ENCODE measurements at regions of chr6 and their contacts with region 1.

Region 1: DNA sequence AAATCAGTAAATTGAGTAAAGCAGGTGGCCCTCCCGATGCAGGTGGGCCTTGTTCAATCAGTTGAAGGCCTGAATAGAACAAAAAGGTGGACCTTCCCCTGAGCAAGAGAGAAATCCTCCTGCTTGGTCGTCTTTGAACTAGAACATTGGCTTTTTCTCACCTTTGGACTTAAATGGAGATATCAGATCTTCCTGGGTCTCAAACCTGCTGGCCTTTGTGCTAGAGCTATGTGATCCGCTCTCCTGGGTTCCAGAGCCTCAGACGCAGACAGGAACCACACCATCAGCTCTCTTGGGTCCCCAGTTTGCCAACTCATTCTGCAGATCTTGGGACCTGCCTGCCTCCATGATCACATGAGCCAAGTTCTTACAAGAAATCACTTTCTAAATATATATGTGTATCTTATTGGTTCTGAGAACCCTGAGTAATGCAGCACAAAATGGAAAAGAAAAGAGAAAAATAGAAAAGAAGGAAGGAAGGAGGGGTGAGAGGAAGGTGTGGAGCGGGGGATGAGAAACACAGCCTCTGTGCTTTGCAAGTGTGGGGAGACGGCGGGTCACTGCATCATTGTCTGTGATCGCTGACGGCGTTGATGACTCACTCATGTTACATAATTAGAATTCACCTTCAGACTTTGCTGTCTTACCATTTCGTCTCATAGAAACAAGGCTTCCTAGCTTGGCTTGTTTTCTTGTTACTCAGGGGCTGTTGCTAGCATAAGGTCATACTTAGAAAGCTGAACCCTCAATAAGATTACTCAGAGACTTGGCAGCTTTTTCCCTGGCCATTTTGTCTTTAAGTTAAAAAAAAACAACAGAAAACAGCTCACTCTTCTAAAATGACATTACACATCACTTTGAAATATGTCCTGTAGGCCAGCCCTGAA is 85.7 kb upstream of the NEDD9 start:
- DNase-seq: peak; percentile 99
- H3K4me3 ChIP-seq: no peak overlapping the region
- H3K27ac ChIP-seq: peak overlapping the region; percentile 100
- H3K4me1 ChIP-seq: peaks cover 37% of the 10 kb centered on the region
- H3K27me3 ChIP-seq: no peaks in the 10 kb centered on the region
- CTCF ChIP-seq: no peak
- POLR2A ChIP-seq: no peak

Region 2: GRCh38 chr6:10451828-10452509 is 866.2 kb before region 1 on chr6:
- CTCF ChIA-PET with region 1: no interaction called
- POLR2A ChIA-PET with region 1: no interaction called
- dilution Hi-C with region 1: no loop called
- intact Hi-C with region 1: no loop called
- DNase-seq: no peak
- H3K4me3 ChIP-seq: no peak overlapping the region
- H3K27ac ChIP-seq: no peak overlapping the region
- H3K4me1 ChIP-seq: no peaks in the 10 kb centered on the region
- H3K27me3 ChIP-seq: no peaks in the 10 kb centered on the region
- CTCF ChIP-seq: no peak
- POLR2A ChIP-seq: no peak

Region 3: DNA sequence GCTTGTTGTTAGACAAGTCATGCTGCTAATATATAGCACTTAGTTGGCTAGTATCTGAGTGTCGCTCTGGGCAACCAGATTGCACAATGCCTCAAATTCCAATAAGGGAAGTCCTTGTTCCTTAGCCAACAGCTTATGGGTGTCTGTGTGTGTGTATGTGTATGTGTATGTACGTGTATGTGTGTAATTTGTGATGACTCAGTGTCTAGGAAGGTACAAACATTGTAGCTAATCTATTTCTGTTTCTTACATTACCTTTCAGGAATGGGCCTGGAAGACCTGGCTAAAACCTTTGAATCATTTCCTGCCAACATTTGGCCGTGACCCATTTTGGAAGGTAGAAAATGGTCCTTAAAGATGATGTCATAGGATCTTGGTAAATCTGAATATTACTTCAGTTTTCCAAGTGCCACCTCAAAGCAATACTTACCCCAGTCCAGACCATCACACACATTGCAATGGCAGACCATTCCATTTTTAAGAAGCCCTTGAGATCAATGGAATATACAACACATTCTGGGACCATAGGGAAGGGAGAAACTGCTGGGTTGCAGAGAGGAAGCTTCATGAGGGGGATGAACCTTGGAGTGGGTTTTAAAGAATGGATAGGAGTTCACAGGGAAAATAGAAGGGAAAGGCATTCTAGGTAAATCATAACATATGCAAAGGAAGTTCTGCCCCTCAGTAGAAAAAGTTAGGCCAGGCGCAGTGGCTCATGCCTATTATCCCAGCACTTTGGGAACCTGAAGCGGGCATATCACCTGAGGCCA is 110.7 kb before region 1 on chr6:
- CTCF ChIA-PET with region 1: interaction called, 3 read pairs
- POLR2A ChIA-PET with region 1: no interaction called
- dilution Hi-C with region 1: no loop called
- intact Hi-C with region 1: loop called (anchors 1 kb)
- DNase-seq: peak; percentile 96
- H3K4me3 ChIP-seq: no peak overlapping the region
- H3K27ac ChIP-seq: peak overlapping the region; percentile 95
- H3K4me1 ChIP-seq: peaks cover 69% of the 10 kb centered on the region
- H3K27me3 ChIP-seq: no peaks in the 10 kb centered on the region
- CTCF ChIP-seq: no peak
- POLR2A ChIP-seq: peak; percentile 43

Region 4: GRCh38 chr6:11251541-11252360 is 66.4 kb before region 1 on chr6:
- CTCF ChIA-PET with region 1: no interaction called
- POLR2A ChIA-PET with region 1: no interaction called
- dilution Hi-C with region 1: no loop called
- intact Hi-C with region 1: loop called (anchors 1 kb)
- DNase-seq: peak; percentile 92
- H3K4me3 ChIP-seq: no peak overlapping the region
- H3K27ac ChIP-seq: peak overlapping the region; percentile 57
- H3K4me1 ChIP-seq: peaks cover 22% of the 10 kb centered on the region
- H3K27me3 ChIP-seq: no peaks in the 10 kb centered on the region
- CTCF ChIP-seq: no peak
- POLR2A ChIP-seq: no peak

Region 5: GRCh38 chr6:11270030-11271027 is 47.8 kb before region 1 on chr6:
- CTCF ChIA-PET with region 1: no interaction called
- POLR2A ChIA-PET with region 1: no interaction called
- dilution Hi-C with region 1: no loop called
- intact Hi-C with region 1: no loop called
- DNase-seq: peak; percentile 11
- H3K4me3 ChIP-seq: no peak overlapping the region
- H3K27ac ChIP-seq: no peak overlapping the region
- H3K4me1 ChIP-seq: no peaks in the 10 kb centered on the region
- H3K27me3 ChIP-seq: no peaks in the 10 kb centered on the region
- CTCF ChIP-seq: no peak
- POLR2A ChIP-seq: no peak

Region 6: GRCh38 chr6:11353921-11354389 is 35.8 kb after region 1 on chr6:
- CTCF ChIA-PET with region 1: interaction called, 6 read pairs
- POLR2A ChIA-PET with region 1: interaction called, 6 read pairs
- dilution Hi-C with region 1: no loop called
- intact Hi-C with region 1: loop called (anchors 1 kb)
- DNase-seq: peak; percentile 94
- H3K4me3 ChIP-seq: peak overlapping the region in 1 of 3 experiments; percentile 7
- H3K27ac ChIP-seq: peak overlapping the region; percentile 97
- H3K4me1 ChIP-seq: peaks cover 31% of the 10 kb centered on the region
- H3K27me3 ChIP-seq: no peaks in the 10 kb centered on the region
- CTCF ChIP-seq: no peak
- POLR2A ChIP-seq: no peak

Region 7: GRCh38 chr6:11428895-11429294 is 110.8 kb after region 1 on chr6:
- CTCF ChIA-PET with region 1: interaction called, 3 read pairs
- POLR2A ChIA-PET with region 1: no interaction called
- dilution Hi-C with region 1: no loop called
- intact Hi-C with region 1: loop called (anchors 1 kb)
- DNase-seq: no peak
- H3K4me3 ChIP-seq: no peak overlapping the region
- H3K27ac ChIP-seq: peak overlapping the region; percentile 79
- H3K4me1 ChIP-seq: peaks cover 70% of the 10 kb centered on the region
- H3K27me3 ChIP-seq: no peaks in the 10 kb centered on the region
- CTCF ChIP-seq: no peak
- POLR2A ChIP-seq: no peak

Region 8: GRCh38 chr6:11700118-11700718 is 382.1 kb after region 1 on chr6:
- CTCF ChIA-PET with region 1: no interaction called
- POLR2A ChIA-PET with region 1: no interaction called
- dilution Hi-C with region 1: no loop called
- intact Hi-C with region 1: no loop called
- DNase-seq: peak; percentile 47
- H3K4me3 ChIP-seq: no peak overlapping the region
- H3K27ac ChIP-seq: no peak overlapping the region
- H3K4me1 ChIP-seq: no peaks in the 10 kb centered on the region
- H3K27me3 ChIP-seq: no peaks in the 10 kb centered on the region
- CTCF ChIP-seq: peak in 1 of 2 donors; percentile 16
- POLR2A ChIP-seq: no peak

Region 9: GRCh38 chr6:12289933-12290820 is 972.0 kb after region 1 on chr6 and contains the start of gene EDN1:
- CTCF ChIA-PET with region 1: no interaction called
- POLR2A ChIA-PET with region 1: no interaction called
- dilution Hi-C with region 1: no loop called
- intact Hi-C with region 1: loop called (anchors 1 kb)
- DNase-seq: peak; percentile 100
- H3K4me3 ChIP-seq: peak within 1 kb of the TSS; percentile 91 to 98 (median 96)
- H3K27ac ChIP-seq: peak within 1 kb of the TSS; percentile 98
- H3K4me1 ChIP-seq: peaks cover 26% of the 10 kb centered on the region
- H3K27me3 ChIP-seq: no peaks in the 10 kb centered on the region
- CTCF ChIP-seq: no peak
- POLR2A ChIP-seq: peak; percentile 100
- total RNA-seq, gene EDN1: 493 and 514 TPM in 2 replicates

Measured in endothelial cell of umbilical vein (primary cell).